Right ventricle myocardium superior (tissue), 1 donor: ENCODE measurements at regions of chr4 and their contacts with region 1.

Region 1: DNA sequence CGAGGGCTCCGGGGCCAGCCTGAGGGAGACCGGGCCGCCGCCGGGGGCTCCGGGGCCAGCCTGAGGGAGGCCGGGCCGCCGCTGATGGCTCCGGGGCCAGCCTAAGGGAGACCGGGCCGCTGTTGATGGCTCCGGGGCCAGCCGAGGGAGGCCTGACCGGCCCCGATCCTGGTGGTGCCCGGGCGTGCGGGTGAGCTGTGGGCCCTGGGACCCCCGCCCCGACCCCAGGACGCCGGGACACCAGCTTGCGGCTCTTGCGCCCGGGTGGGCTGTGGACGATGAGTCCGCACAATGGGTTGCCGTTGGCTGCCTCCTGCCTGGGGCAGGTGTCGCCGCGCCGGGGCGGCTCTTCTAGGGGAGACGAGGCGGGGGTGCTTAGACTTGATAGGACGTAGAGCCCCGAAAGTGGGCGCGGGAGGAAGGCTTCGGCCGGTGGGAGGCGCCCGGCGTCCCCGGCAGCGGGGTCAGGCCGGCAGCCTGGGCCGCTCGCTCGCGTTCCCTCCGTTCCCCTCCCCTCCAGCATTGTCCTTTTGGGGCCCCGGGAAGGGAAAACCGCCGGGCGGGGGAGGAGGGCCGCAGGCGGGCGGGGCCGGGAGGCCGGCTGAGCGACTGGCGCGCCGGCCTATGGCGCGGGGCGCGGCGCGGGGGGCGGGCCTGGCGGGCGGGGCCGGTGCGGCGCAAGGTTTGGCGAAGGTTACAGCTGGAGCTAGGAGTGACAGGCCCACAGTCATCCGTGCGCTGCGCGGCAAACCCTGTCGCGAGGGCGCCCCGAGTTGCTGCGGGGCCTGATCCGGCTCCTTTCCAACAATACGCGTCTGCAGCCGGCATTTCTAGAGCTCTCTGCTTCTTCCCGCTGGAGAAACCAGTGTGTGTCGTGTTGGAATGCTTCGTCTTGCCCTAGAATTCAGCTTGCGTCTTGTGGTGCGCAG is 790 bp downstream of the KIAA0232 start:
- DNase-seq: peak; percentile 94
- ATAC-seq: peak; percentile 86

Region 2: DNA sequence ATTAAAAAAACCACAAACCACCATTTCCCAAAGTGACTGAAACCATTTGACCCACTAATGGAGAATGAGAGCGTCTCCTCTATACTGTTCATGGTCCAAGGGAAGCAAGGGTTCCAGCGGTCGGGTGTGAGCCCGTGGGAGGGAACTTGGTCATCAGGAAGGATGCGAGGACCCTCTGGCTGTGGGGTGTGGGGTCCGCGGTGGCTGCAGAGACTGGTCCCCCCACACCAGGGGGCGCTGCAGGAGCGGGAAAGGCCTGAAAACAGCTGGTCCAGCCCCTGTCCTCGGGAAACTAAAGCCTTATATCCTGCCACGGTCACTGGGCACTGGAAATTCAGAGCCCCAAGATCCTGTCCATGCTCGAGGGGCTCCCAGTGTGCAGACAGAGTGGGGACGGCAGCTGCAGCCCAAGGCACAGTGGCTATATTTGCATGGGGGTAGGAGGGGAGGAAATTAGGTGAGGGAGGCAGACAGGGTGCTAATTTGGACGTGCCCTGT is 63.1 kb before region 1 on chr4:
- intact Hi-C with region 1: loop called (anchors 5 kb)
- DNase-seq: peak; percentile 89
- ATAC-seq: peak; percentile 79

Region 3: GRCh38 chr4:6855692-6856297 is 72.5 kb after region 1 on chr4:
- intact Hi-C with region 1: loop called (anchors 5 kb)
- DNase-seq: no peak
- ATAC-seq: peak; percentile 85

Region 4: GRCh38 chr4:6873792-6874461 is 90.6 kb after region 1 on chr4:
- intact Hi-C with region 1: loop called (anchors 5 kb)
- DNase-seq: peak; percentile 88
- ATAC-seq: peak; percentile 65

Region 5: DNA sequence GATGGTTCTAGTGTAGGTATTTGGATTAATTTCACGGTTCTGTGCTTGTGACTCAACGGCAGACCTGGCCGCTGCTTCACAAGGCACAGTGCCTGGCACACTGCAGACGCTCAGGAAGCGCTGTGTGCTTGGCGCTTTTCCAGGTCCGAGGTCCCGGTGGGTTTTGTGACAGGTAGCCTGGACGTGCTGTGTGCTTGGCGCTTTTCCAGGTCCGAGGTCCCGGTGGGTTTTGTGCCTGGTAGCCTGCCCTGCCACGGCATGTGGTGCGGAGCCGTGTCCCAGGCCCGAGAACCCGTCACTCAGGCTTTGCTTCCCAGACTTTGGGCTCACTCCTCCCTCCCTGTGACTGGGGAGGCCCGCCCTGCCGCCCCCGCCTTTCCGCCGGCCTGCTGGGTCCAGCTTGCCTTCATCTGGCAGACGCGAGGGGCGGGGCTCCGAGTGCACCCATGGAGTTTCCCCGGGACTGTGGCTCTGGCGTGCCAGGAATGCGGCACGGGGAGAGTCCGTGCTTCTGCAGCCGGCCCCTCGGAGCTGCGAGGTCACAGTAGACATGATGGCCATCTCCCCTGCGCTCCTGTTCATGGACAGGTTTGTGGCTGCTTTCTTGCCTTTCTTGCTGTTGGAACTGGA is 170.5 kb after region 1 on chr4:
- intact Hi-C with region 1: no loop called
- DNase-seq: peak; percentile 87
- ATAC-seq: peak; percentile 85